ENCODE measurements at regions of chr1 and their contacts with region 1.

Region 1: DNA sequence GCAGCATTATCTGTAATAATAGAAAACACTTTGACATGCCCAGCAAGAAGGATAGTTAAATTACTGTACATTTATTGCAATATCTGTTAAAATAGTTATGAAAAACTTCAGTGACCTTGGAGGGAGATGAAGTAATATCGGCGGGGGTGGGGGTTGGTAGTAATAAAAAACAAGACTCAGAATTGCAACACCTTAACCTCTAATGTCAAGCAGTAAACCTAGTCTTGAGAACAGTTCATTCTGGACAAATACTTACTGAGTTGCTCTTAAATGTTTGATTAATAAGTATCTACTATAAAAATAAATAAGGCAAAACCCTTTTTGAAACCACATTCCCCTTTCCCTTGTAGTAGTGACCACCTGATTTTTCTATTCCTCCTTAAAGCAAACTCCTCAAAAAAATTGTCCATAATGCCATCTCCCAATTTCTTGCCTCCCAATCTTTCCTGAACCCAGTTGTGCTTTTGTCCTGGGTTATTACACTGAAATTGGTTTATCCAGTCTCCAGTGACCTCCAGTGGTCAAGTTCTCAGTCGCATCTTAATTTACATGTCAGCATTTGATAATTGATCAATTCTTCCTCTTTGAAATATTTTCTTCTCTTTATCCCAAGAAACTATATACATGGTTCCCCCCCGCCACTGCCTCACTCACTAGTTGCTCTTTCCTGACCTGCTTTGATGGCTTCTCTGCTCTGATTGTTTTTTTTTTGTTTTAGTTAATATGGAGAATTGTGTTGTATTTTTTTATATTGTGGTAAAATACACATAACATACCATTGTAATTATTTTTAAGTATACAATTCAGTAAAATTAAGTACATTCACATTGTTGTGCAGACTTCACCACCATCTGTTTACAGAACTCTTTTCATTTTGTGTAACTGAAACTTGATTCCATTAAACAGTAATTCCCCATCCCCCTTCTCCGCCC is 36.8 kb downstream of the RAP1A start:
- DNase-seq: peak; percentile 71
- ATAC-seq: peak; percentile 45; the same call in 1 of the 2 replicates
- H3K4me3 ChIP-seq: no peak overlapping the region
- H3K27ac ChIP-seq: no peak overlapping the region
- H3K4me1 ChIP-seq: no peaks in the 10 kb centered on the region
- H3K27me3 ChIP-seq: no peaks in the 10 kb centered on the region
- CTCF ChIP-seq: peak; percentile 87

Region 2: GRCh38 chr1:111559736-111560279 is 96.5 kb before region 1 on chr1:
- CTCF ChIA-PET with region 1: no interaction called
- POLR2A ChIA-PET with region 1: no interaction called
- intact Hi-C with region 1: loop called (anchors 5 kb)
- DNase-seq: peak; percentile 43
- ATAC-seq: no peak
- H3K4me3 ChIP-seq: no peak overlapping the region
- H3K27ac ChIP-seq: no peak overlapping the region
- H3K4me1 ChIP-seq: peaks cover 13% of the 10 kb centered on the region
- H3K27me3 ChIP-seq: no peaks in the 10 kb centered on the region
- CTCF ChIP-seq: no peak

Region 3: GRCh38 chr1:111672331-111672730 is 16.0 kb after region 1 on chr1:
- CTCF ChIA-PET with region 1: no interaction called
- POLR2A ChIA-PET with region 1: no interaction called
- intact Hi-C with region 1: no loop called
- DNase-seq: no peak
- ATAC-seq: no peak
- H3K4me3 ChIP-seq: no peak overlapping the region
- H3K27ac ChIP-seq: no peak overlapping the region
- H3K4me1 ChIP-seq: no peaks in the 10 kb centered on the region; the same call in 1 of the 2 replicates
- H3K27me3 ChIP-seq: no peaks in the 10 kb centered on the region
- CTCF ChIP-seq: no peak

Measured in PC-3 (cell line).